ENCODE measurements at regions of chr20 and their contacts with region 1.

Region 1: GRCh38 chr20:52083627-52084232 is 107.8 kb downstream of the ZFP64 start:
- ATAC-seq: peak; percentile 72 to 94 (median 84)
- H3K4me3 ChIP-seq: no peak overlapping the region
- H3K27ac ChIP-seq: no peak overlapping the region
- H3K4me1 ChIP-seq: peaks cover 0 to 3% of the 10 kb centered on the region in 2 donors

Region 2: GRCh38 chr20:50987592-50988210 is 1096.0 kb before region 1 on chr20:
- in situ Hi-C with region 1: loop called in 1 of 9 experiments (anchors 25 kb)
- ATAC-seq: peak; percentile 81 to 98 (median 93)
- H3K4me3 ChIP-seq: no peak overlapping the region
- H3K27ac ChIP-seq: no peak overlapping the region
- H3K4me1 ChIP-seq: peaks cover 3 to 4% of the 10 kb centered on the region in 2 donors

Region 3: GRCh38 chr20:51372176-51372803 is 711.4 kb before region 1 on chr20:
- in situ Hi-C with region 1: loop called in 7 of 9 experiments (anchors 10 to 25 kb)
- ATAC-seq: peak; percentile 87 to 100 (median 99)
- H3K4me3 ChIP-seq: no peak overlapping the region
- H3K27ac ChIP-seq: no peak overlapping the region
- H3K4me1 ChIP-seq: peaks cover 0 to 3% of the 10 kb centered on the region in 2 donors

Region 4: DNA sequence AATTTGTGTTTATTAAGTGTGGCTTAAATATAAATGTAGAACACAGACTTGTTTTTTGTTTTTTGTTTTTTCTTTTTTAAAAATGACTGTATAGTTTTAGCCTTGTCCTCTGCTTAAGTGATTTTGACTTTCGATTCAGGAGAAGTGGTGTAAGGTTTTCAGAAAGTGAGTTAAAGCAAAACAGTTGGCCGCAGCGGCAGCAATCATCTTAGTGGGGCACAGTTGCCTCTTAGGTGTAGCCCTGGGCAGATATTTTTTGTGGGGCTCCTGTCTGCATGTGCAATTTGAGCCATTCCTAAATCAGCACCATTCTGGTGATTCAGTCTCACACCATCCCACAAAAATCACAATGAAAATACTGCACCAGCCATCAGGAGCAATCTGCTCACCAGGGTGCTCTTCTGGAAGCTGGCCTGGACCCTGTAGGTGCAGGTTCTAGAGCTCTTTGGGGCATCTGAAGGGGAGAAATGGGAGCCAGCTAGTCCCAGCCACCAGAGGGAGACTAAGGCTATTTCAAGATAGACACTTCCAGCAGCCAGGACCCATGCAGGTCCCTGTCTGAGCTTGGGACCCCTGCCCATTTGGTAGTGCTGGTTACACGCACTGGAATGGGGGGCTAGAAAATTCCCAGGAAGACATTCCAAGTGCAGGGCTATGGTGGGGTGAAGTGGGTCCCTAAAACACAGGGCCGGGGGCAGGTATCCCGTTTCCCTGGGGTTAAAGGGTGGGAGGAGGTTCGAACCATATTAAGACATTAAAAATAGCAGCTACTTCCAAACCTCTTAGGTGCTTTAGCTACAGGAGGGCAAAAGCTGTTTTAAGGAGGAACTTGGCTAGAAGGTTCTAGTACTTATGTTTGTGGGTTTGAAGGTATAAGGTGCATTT is 697.8 kb before region 1 on chr20:
- in situ Hi-C with region 1: loop called in 1 of 9 experiments (anchors 25 kb)
- ATAC-seq: peak in 4 of 8 experiments; percentile 37 to 80 (median 61)
- H3K4me3 ChIP-seq: no peak overlapping the region
- H3K27ac ChIP-seq: no peak overlapping the region
- H3K4me1 ChIP-seq: peaks cover 9 to 10% of the 10 kb centered on the region in 2 donors

Region 5: DNA sequence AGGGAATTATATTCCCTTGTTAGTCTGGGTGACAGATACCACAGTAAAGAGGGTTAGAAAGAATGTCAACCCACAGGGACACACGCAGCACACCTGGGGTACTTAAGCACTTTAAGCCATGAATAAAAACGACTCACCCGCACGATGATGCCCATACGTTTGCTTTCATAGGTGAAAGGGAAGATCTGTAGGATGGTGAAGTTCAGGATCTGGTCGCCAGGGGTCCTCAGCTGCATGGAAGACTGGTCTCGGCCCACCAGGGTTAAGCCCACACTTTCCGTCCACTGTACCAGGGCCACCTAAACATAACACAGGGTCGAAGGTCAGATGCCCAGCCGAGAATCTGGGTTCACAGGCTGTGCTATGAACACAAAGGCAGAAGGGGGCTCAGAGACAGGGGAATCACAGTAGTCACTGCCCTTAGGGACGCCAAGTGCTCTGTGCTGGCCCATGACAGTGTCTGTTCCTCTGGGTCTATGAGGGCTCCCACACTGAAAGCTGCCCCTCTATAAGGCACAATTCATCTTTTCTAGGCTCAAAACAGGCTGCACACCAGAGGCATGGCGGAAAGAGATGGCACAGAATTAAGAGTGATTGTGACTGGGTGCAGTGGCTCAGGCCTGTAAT is 444.4 kb before region 1 on chr20:
- in situ Hi-C with region 1: loop called in 7 of 9 experiments (anchors 25 kb)
- ATAC-seq: peak; percentile 58 to 90 (median 70)
- H3K4me3 ChIP-seq: no peak overlapping the region
- H3K27ac ChIP-seq: no peak overlapping the region
- H3K4me1 ChIP-seq: no peaks in the 10 kb centered on the region

Region 6: DNA sequence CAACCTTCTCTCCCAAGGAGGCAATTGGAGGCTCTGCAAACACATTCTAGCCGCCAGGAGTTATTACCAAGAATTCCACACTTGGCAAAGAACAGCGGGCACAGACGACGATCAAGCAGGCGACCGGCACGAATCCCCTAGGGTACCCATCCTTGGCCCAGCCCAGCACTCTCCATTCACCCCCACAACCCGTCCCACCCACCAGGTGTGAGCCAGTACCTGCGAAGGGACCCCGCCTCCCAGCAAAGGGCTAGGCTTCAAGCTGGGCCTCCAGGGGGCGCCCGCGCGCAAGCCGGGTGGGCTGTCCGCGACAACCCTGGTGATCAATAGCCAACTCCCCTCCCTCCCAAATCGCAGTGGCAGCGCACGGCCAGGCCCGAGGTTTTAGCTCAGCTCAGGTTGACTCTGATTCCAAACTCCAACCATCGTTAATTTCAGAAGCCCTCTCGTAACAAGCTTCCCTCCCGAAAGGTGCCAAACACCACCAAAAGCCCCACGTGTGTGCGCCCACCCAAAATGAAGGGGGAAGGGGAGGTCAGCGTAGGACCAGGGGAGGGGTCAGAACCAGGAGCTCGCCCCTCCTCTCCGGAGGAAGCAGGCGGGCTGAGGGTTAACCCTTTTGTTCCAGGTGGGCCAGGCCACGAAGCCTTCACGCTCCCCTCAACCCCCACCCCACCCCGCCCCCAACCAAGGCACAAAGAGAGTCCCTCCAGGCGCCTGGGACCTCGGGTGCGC is 283.5 kb before region 1 on chr20:
- in situ Hi-C with region 1: loop called in 1 of 9 experiments (anchors 25 kb)
- ATAC-seq: peak; percentile 76 to 92 (median 87)
- H3K4me3 ChIP-seq: peak overlapping the region; percentile 43 to 89 (median 49)
- H3K27ac ChIP-seq: peak overlapping the region; percentile 73 to 84
- H3K4me1 ChIP-seq: peaks cover 21 to 25% of the 10 kb centered on the region in 2 donors

Region 7: DNA sequence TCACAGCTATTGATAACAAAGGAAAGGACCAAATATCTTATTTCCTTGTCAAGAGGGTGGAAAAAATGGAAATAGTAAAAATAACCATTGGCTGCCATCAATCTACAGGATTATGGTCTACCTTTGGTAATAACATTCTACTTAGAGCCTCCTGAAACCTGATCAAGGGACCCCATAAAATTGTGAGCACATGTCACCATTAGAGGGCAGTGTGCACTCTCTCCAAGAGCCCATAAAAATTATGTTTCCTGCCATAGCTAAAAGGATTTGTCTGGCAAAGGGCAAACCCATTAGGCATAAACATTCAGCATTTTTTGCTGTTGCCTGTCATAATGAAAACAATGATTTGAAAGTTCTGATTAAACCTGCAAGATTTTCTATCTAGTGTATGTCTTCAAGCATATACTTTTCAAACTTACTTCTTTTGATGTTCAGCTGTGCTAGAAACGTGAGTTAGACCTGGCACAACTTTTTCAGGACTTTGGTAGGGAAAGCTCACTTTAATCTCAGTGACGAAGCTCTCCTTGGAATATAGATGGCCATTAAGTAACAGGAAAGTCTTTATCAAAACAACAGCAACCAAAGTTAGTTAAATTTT is 228.5 kb after region 1 on chr20:
- in situ Hi-C with region 1: no loop called
- ATAC-seq: peak in 7 of 8 experiments; percentile 31 to 81 (median 51)
- H3K4me3 ChIP-seq: no peak overlapping the region
- H3K27ac ChIP-seq: no peak overlapping the region
- H3K4me1 ChIP-seq: peaks cover 27 to 56% of the 10 kb centered on the region in 2 donors